Dorsolateral prefrontal cortex (tissue), 120 donors: ENCODE measurements at regions of chr10 and their contacts with region 1.

Region 1: DNA sequence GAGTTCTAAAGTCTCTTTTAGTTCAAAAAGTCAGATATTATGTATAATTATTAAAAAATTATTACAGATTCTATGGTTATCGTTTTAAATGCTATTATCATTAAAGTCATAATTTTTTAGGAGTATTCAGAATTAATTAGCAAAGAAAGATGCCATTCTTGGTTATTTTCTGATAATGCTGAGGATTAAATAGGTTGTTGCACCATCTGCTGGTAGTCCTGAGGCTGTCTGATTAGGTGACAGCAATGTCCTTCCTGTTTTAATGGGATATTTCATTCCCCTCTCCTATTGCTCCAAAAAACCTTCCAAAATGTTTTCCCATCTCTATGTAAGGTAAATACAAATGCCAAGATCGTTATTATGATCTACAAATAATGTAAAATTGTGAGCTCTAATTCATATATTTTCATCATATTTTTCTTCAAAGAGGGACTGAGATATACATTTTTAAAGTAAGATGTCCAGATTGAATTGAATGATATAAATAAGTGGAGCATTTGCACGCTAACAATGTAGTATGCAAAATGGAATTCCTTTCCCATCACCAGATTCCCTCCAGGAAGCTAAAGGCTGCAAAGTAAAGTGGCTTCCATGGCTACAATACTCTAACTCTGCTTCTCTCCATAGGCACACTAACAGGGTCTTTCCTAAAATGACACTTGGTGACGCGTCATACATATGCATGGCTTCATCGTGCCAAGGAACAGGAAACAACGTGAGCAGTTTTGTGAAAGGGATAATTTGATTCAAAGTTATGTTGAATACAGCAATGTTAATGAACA is 58.8 kb upstream of the AKR1E2 start:
- DNase-seq: no peak
- H3K4me3 ChIP-seq: no peak overlapping the region
- H3K27ac ChIP-seq: no peak overlapping the region
- H3K27me3 ChIP-seq: peaks cover 0 to 8% (median 0%) of the 10 kb centered on the region in 45 donors
- CTCF ChIP-seq: peak; percentile 47 to 88 (median 71)

Region 2: GRCh38 chr10:3197348-3198003 is 1569.7 kb before region 1 on chr10:
- intact Hi-C with region 1: loop called (anchors 5 kb)
- DNase-seq: peak; percentile 65 to 88 (median 77)
- H3K4me3 ChIP-seq: peak overlapping the region in 51 of 59 donors; percentile 1 to 62 (median 34)
- H3K27ac ChIP-seq: peak overlapping the region in 3 of 59 donors; percentile 2 to 51 (median 22)
- H3K27me3 ChIP-seq: peaks cover 0 to 6% (median 0%) of the 10 kb centered on the region in 45 donors
- CTCF ChIP-seq: peak; percentile 37 to 94 (median 84)

Region 3: GRCh38 chr10:3239066-3239919 is 1527.9 kb before region 1 on chr10:
- intact Hi-C with region 1: loop called (anchors 2 to 5 kb)
- DNase-seq: peak in 9 of 10 donors; percentile 34 to 80 (median 71)
- H3K4me3 ChIP-seq: peak overlapping the region in 7 of 59 donors; percentile 2 to 32 (median 19)
- H3K27ac ChIP-seq: no peak overlapping the region
- H3K27me3 ChIP-seq: peaks cover 0 to 25% (median 0%) of the 10 kb centered on the region in 45 donors
- CTCF ChIP-seq: peak; percentile 68 to 97 (median 91)

Region 4: DNA sequence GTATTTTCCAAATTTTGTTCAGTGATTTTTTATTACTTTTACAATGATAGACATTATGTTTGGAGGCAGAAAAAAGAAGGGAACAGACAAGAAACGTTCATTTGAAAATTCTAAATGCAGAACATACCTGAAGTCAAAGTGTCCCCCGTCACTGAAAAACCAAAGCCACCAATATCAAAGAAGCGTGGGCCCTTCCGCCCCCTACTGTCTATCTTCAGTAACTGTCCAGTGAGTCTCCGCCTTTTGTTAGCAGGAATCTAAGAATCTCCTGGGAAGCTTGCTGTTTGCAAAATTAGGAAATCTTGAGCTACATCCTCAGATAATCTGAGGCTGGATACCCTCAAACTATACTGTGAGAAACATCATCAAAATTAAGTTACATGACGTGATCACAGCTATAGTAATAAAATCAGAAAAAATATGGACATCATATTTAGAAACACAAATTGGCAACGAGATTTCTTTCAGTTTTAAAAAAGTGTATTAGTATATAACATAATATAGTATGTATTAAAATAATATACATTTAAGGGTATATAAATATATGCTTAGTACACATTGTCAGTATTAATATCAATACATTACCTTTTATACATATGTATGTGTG is 110.5 kb before region 1 on chr10:
- intact Hi-C with region 1: loop called in 1 of 2 experiments (anchors 10 kb)
- DNase-seq: peak in 6 of 10 donors; percentile 32 to 68 (median 58)
- H3K4me3 ChIP-seq: no peak overlapping the region
- H3K27ac ChIP-seq: no peak overlapping the region
- H3K27me3 ChIP-seq: no peaks in the 10 kb centered on the region
- CTCF ChIP-seq: peak; percentile 66 to 97 (median 88)